ENCODE measurements at regions of chr2 and their contacts with region 1.

Region 1: GRCh38 chr2:225282858-225283710 is 116.4 kb upstream of the NYAP2 start:
- DNase-seq: peak; percentile 17
- H3K4me3 Mint-ChIP-seq: no peak overlapping the region
- H3K27ac Mint-ChIP-seq: no peak overlapping the region
- H3K4me1 Mint-ChIP-seq: no peaks in the 10 kb centered on the region
- H3K27me3 Mint-ChIP-seq: no peaks in the 10 kb centered on the region

Region 2: GRCh38 chr2:225122583-225123486 is 160.2 kb before region 1 on chr2:
- CTCF ChIA-PET with region 1: interaction called, 3 read pairs
- POLR2A ChIA-PET with region 1: no interaction called
- intact Hi-C with region 1: loop called (anchors 2 kb)
- DNase-seq: peak; percentile 18
- H3K4me3 Mint-ChIP-seq: no peak overlapping the region
- H3K27ac Mint-ChIP-seq: no peak overlapping the region
- H3K4me1 Mint-ChIP-seq: no peaks in the 10 kb centered on the region
- H3K27me3 Mint-ChIP-seq: no peaks in the 10 kb centered on the region